ENCODE measurements at regions of chrX and their contacts with region 1.

Region 1: DNA sequence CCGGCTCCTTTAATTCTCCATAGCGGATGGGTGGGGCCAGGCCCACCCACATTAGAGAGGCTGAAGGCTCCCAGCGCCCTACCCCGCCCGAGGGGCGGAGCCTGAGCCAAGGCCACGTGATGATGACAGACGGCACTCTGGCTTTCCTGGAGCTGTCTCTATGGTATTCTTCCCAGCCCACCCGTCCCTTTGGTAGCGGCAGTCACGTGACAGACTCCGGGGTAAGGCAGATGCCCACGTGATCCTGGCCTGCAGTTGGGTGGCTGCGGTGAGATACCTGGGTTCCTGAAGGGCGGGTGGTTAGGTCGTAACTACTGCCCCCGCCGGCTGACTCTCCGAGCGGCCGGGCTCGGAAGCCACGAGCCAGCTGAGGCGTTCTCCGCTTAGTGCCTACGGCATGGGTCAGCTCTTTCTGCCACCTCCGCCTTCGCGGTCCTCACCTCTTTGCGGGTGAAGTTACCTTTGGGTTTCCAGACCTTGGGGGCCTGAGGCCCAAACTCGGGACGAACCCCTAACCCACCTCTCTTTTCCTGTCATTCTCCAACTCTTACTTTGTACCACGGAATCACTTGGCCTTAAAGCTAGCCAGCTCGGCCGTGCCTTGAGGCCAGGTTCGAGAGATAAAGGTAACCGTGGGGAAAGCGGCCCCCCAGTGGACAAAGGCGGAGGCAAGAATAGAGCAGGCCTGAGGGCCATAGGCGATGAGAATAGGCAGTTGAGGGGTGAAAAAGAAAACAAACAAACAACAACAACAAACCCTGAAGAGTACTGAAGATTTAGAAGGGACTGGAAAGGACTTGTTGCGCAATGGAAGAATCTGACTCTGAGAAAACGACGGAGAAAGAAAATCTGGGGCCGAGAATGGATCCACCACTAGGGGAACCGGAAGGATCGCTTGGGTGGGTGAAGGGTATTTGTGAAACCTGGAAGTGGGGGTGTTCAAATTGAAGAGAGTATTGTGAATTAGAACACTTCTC is at the start of gene RRAGB:
- DNase-seq: peak; percentile 93 to 96 (median 94)
- ATAC-seq: peak; percentile 100
- H3K4me3 ChIP-seq: peak within 1 kb of the TSS; percentile 51 to 99 (median 70)
- H3K27ac ChIP-seq: peak within 1 kb of the TSS; percentile 62 to 89 (median 86)
- H3K4me1 ChIP-seq: peaks cover 0 to 21% (median 2%) of the 10 kb centered on the region in 12 donors
- H3K27me3 ChIP-seq: no peaks in the 10 kb centered on the region
- CTCF ChIP-seq: peak in 11 of 12 donors; percentile 23 to 58 (median 45)
- POLR2A ChIP-seq: no peak
- total RNA-seq, gene RRAGB: 8.1 to 16.1 (median 11.5) TPM

Region 2: DNA sequence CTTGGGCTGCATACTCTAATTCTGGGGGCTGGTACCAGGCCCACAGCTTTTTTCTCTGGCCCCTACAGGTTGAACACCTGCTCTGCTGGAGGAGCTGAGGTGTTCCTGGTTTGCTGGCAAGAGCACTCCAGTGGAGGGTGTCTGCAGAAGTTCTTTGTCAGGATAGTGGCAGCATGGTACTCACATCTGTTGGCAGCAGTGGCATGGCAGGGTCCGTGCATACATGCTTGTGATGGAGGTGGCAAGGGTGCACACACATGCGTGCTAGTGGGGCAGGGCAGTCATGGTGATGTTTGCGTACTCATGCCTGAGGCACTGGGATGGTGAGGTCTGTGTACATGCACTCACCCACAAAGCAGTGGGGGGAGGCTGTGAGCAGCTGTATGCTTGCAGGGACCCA is 278.8 kb after region 1 on chrX:
- intact Hi-C with region 1: no loop called
- DNase-seq: no peak
- ATAC-seq: no peak
- H3K4me3 ChIP-seq: no peak overlapping the region
- H3K27ac ChIP-seq: no peak overlapping the region
- H3K4me1 ChIP-seq: no peaks in the 10 kb centered on the region
- H3K27me3 ChIP-seq: no peaks in the 10 kb centered on the region
- CTCF ChIP-seq: no peak
- POLR2A ChIP-seq: no peak

Region 3: GRCh38 chrX:56232221-56233082 is 514.6 kb after region 1 on chrX and contains the start of gene KLF8:
- intact Hi-C with region 1: loop called in 1 of 10 experiments (anchors 10 kb)
- DNase-seq: peak; percentile 34 to 52 (median 50)
- ATAC-seq: peak; percentile 74 to 83 (median 78)
- H3K4me3 ChIP-seq: peak within 1 kb of the TSS; percentile 13 to 69 (median 55)
- H3K27ac ChIP-seq: peak within 1 kb of the TSS; percentile 46 to 81 (median 70)
- H3K4me1 ChIP-seq: peaks cover 0 to 27% (median 1%) of the 10 kb centered on the region in 12 donors
- H3K27me3 ChIP-seq: peaks cover 0 to 19% (median 0%) of the 10 kb centered on the region in 9 donors
- CTCF ChIP-seq: no peak
- POLR2A ChIP-seq: peak in 1 of 2 donors; percentile 31
- total RNA-seq, gene KLF8: 1.4 to 6.2 (median 2.6) TPM

Measured in heart left ventricle (tissue), 16 donors.